T-cell (primary cell): ENCODE measurements at regions of chr11 and their contacts with region 1.

Region 1: DNA sequence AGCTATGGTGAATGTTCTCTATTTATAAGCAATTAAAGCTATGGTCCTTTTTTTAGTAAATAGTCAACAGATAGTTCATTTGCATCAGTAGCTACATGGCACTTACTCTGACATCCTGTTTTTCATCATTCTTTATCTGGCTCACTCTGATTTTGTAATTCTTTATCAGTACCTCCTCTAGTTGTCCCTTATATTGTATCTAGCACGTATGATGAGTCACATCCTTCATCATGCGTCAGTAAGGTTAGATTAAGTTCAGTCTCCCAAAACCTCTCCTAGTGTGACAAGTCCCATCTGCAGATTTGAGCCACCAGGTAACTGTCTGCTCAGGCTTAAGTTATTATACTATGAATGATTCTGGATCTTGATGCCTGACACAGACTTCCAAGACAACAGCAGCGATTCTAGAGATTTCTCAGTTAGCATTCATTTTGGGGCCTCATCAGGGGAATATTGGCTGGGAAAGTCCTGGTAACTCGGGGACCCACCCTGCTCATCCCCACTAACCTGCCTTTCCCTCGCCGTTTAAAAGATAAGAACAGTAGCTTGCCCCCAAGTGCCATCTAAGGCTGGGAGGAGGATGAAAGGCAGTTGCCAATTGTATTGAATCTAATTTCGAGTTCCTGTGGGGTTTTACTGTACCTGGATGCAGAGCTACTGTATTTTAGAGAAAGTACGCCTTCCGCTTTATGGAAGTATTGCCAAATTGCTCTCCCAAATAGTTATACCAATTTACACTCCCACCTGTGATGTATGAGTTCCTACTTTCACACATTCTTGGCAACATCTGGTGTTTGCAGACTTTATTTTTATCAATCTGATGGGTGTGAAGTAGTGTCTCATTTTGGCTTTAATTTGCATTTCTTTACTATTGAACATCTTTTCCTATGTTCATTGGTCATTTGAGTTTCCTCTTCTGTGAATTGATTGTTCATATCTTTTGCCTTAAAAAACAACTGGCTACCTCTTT is 55.9 kb downstream of the ZC3H12C start:
- DNase-seq: no peak
- ATAC-seq: peak in 2 of 4 experiments; percentile 27 to 36
- H3K4me3 ChIP-seq: no peak overlapping the region
- H3K4me3 Mint-ChIP-seq: no peak overlapping the region
- H3K27ac ChIP-seq: no peak overlapping the region
- H3K27ac Mint-ChIP-seq: no peak overlapping the region
- H3K4me1 ChIP-seq: no peaks in the 10 kb centered on the region
- H3K4me1 Mint-ChIP-seq: peaks cover 0 to 2% (median 0%) of the 10 kb centered on the region in 3 donors
- H3K27me3 ChIP-seq: peaks cover 0 to 5% of the 10 kb centered on the region in 2 experiments
- H3K27me3 Mint-ChIP-seq: peaks cover 4 to 7% of the 10 kb centered on the region in 2 donors

Region 2: GRCh38 chr11:110130642-110131238 is 18.3 kb before region 1 on chr11:
- CTCF ChIA-PET with region 1: no interaction called
- POLR2A ChIA-PET with region 1: no interaction called
- DNase-seq: no peak
- ATAC-seq: no peak
- H3K4me3 ChIP-seq: no peak overlapping the region
- H3K4me3 Mint-ChIP-seq: no peak overlapping the region
- H3K27ac ChIP-seq: no peak overlapping the region
- H3K27ac Mint-ChIP-seq: no peak overlapping the region
- H3K4me1 ChIP-seq: no peaks in the 10 kb centered on the region
- H3K4me1 Mint-ChIP-seq: no peaks in the 10 kb centered on the region
- H3K27me3 ChIP-seq: peaks cover 0 to 4% of the 10 kb centered on the region in 2 experiments
- H3K27me3 Mint-ChIP-seq: peaks cover 5 to 11% of the 10 kb centered on the region in 2 donors

Region 3: DNA sequence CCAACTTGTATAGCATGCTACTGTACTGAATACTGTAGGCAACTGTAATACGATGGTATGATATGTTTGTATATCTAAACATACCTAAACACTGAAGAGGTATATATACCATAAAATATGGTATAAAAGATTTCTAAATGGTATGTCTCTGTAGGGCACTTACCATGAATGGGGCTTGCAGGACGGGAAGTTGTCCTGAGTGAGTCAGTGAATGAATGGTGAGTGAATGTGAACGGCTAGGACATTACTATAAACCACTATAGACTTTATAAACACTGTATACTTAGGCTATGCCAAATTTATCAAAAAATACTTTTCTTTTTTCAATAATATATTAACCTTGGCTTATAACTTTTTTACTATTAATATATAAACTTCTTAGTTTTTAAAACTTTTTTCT is 11.0 kb after region 1 on chr11:
- CTCF ChIA-PET with region 1: no interaction called
- POLR2A ChIA-PET with region 1: no interaction called
- DNase-seq: no peak
- ATAC-seq: no peak
- H3K4me3 ChIP-seq: no peak overlapping the region
- H3K4me3 Mint-ChIP-seq: no peak overlapping the region
- H3K27ac ChIP-seq: no peak overlapping the region
- H3K27ac Mint-ChIP-seq: no peak overlapping the region
- H3K4me1 ChIP-seq: no peaks in the 10 kb centered on the region
- H3K4me1 Mint-ChIP-seq: no peaks in the 10 kb centered on the region
- H3K27me3 ChIP-seq: peaks cover 0 to 4% of the 10 kb centered on the region in 2 experiments
- H3K27me3 Mint-ChIP-seq: peaks cover 3 to 4% of the 10 kb centered on the region in 2 donors

Region 4: GRCh38 chr11:110738641-110739040 is 589.6 kb after region 1 on chr11:
- CTCF ChIA-PET with region 1: no interaction called
- POLR2A ChIA-PET with region 1: interaction called in 1 of 2 experiments, 11 read pairs
- DNase-seq: peak in 1 of 35 experiments; percentile 1
- ATAC-seq: no peak
- H3K4me3 ChIP-seq: no peak overlapping the region
- H3K4me3 Mint-ChIP-seq: no peak overlapping the region
- H3K27ac ChIP-seq: no peak overlapping the region
- H3K27ac Mint-ChIP-seq: no peak overlapping the region
- H3K4me1 ChIP-seq: no peaks in the 10 kb centered on the region
- H3K4me1 Mint-ChIP-seq: no peaks in the 10 kb centered on the region
- H3K27me3 ChIP-seq: no peaks in the 10 kb centered on the region
- H3K27me3 Mint-ChIP-seq: peaks cover 6 to 15% of the 10 kb centered on the region in 2 donors